ENCODE measurements at regions of chr19 and their contacts with region 1.

Region 1: DNA sequence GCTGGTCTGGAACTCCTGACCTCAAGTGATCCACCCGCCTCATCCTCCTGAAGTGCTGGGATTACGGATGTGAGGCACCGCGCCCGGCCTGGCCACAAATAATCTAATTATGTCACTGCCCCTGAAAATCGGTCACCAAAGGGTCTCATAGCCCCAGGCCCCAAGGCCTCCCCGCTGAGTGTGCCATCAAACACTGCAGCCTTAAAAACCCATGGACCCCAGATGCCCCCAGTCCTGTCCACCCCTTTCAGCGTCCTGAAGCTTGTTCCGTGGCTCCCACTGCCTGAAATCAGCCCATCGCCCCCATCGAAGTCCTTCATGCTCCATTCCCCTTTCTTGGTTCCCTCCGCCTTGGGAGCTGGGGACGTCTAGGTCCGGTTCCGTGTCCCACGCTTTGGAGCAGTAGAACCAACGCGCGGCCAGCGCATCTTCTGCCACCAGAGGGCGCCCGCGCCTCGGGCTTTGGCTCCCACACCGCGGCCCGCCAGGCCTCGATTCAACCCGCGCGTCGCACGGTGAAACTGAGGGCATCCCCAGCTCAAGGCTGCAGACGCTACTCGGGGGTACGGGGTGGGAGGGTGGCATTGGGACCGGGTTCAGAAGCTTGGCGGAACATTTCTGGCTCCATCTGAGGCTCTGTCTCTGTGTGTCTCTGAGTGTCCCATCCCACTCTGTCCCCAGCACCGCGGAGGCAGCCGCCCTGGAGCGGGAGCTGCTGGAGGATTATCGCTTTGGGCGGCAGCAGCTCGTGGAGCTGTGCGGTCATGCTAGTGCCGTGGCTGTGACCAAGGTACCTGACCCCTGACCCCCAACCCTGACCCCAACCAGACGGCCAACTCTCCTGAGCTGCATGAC is 3.5 kb downstream of the YJEFN3 start:
- DNase-seq: peak; percentile 79
- H3K4me3 Mint-ChIP-seq: no peak overlapping the region
- H3K27ac Mint-ChIP-seq: peak overlapping the region; percentile 62
- H3K4me1 Mint-ChIP-seq: peaks cover 10% of the 10 kb centered on the region
- H3K27me3 Mint-ChIP-seq: no peaks in the 10 kb centered on the region
- CTCF ChIP-seq: peak; percentile 87

Region 2: GRCh38 chr19:19342756-19343322 is 189.3 kb before region 1 on chr19:
- CTCF ChIA-PET with region 1: no interaction called
- intact Hi-C with region 1: no loop called
- DNase-seq: peak; percentile 44
- H3K4me3 Mint-ChIP-seq: no peak overlapping the region
- H3K27ac Mint-ChIP-seq: no peak overlapping the region
- H3K4me1 Mint-ChIP-seq: no peaks in the 10 kb centered on the region
- H3K27me3 Mint-ChIP-seq: no peaks in the 10 kb centered on the region
- CTCF ChIP-seq: peak; percentile 56

Region 3: GRCh38 chr19:19643158-19644053 is 111.2 kb after region 1 on chr19 and contains the start of gene GMIP:
- CTCF ChIA-PET with region 1: interaction called, 3 read pairs
- intact Hi-C with region 1: loop called (anchors 1 kb)
- DNase-seq: peak; percentile 79
- H3K4me3 Mint-ChIP-seq: peak within 1 kb of the TSS; percentile 87
- H3K27ac Mint-ChIP-seq: peak within 1 kb of the TSS; percentile 67
- H3K4me1 Mint-ChIP-seq: peaks cover 8% of the 10 kb centered on the region
- H3K27me3 Mint-ChIP-seq: no peaks in the 10 kb centered on the region
- CTCF ChIP-seq: peak; percentile 80
- total RNA-seq, gene GMIP: 17.2 and 17.3 TPM in 2 replicates

Region 4: DNA sequence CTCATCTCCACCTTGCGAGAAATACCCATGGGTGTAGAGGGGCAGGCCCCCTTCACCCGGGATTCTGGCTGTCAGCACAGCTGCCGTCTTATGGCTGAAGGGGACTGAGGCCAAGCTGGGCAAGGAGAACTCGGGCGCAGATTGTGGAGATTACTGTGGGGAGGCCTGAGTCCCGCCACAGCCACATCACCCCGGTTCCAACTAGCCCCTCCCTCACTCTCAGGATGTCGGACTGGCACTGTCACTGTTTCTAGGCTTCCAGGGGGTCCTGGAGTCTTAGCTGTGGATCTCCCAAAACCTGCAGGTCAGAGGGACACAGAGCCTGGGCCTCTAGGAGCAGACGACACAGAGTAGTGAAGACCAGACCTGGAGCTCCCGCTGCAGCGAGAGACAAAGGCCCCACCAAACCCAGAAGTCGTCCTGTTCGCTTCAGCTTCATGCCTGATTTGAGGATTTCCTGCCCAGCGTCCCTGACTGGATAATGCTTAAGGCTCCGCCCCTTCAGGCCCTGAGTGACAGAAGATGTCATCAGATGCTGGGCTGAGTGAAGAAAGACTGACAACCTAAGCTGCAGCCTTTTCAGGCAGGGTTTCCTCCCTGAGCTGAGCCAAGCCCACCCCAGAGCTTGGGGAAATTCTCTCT is 424.4 kb after region 1 on chr19:
- CTCF ChIA-PET with region 1: no interaction called
- intact Hi-C with region 1: loop called (anchors 10 kb)
- DNase-seq: no peak
- H3K4me3 Mint-ChIP-seq: no peak overlapping the region
- H3K27ac Mint-ChIP-seq: no peak overlapping the region
- H3K4me1 Mint-ChIP-seq: no peaks in the 10 kb centered on the region
- H3K27me3 Mint-ChIP-seq: no peaks in the 10 kb centered on the region
- CTCF ChIP-seq: no peak

Measured in Calu3 (cell line).